Aorta (tissue), 5 donors: ENCODE measurements at regions of chr10 and their contacts with region 1.

Region 1: GRCh38 chr10:91556691-91557566 is 75.9 kb downstream of the PPP1R3C start:
- DNase-seq: no peak
- ATAC-seq: no peak
- H3K4me3 ChIP-seq: no peak overlapping the region
- H3K27ac ChIP-seq: peak overlapping the region in 1 of 2 donors; percentile 70
- H3K4me1 ChIP-seq: peaks cover 0 to 2% of the 10 kb centered on the region in 2 donors
- H3K27me3 ChIP-seq: no peaks in the 10 kb centered on the region

Region 2: DNA sequence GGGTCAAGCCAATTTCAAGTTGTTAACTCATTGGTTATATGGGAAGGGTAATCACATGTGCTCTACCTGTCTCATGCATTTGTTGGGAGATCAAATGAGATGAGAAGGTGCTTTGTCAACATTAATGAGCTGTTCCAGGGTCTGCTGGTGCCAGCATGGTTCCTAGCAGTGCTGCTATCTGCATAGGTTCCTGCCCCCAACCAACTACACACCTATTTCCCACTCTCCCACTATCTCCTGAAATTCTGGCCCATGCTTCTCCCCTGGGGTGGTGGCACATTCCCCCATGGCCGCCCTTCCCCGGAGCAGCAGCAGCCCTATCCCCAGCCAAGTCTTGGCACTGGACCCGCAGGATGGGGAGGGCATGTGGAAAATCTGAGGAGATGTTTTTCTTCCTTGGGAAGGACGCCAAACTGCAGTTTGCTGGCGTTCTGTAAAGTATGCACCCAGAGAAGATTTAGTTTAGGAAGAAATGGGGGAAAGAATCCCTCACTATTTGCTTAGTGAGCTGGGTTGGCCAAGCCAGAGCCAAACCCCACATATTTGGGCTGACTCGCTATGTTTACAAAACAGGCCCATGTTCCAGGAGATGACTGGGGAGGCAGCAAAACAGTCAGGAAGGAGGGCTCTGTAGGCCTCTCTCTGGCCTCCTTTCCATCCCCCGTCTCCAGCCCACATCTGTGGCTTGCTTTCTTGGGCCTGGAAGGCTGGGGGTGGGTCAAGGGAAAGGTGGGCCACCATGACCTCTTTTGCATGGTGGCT is 33.4 kb after region 1 on chr10:
- intact Hi-C with region 1: no loop called
- DNase-seq: peak; percentile 91 to 92
- ATAC-seq: peak; percentile 80
- H3K4me3 ChIP-seq: no peak overlapping the region
- H3K27ac ChIP-seq: peak overlapping the region; percentile 98
- H3K4me1 ChIP-seq: peaks cover 7 to 35% of the 10 kb centered on the region in 2 donors
- H3K27me3 ChIP-seq: no peaks in the 10 kb centered on the region

Region 3: DNA sequence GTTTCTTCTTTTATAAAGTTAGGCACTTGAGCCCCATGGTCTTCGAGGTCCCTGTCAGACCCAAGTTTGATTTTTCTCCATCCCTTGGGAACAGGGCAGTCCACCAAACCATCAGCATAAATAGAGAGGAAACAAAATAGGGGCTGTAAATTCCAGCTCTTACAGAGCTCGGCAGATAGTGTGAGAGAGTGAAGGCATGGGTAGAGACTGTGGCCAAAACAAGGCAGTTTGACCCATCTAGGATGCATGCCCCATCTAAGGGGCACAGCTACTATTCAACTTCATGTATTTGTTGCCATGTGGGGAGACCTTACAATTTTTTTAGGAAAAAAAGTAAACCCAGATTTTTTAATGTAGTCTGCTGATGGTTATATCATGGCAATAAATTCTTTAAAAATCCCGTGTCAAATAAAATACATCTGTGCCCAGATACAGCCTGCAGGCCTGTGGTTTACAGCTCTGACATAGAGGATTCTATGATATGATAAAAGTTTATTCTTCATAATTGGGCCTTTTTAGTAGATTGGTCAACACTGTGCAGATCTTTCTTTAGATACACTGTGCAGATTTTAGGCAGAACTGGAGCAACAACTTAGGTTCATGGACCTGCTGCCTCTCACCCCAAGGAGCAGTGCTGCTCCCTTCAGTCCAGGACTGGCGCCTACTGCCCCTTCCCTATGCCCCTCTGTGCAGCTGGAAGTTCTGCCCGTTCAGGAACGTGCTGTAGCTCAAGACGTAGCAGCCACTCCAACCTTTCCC is 70.6 kb after region 1 on chr10:
- intact Hi-C with region 1: loop called in 1 of 2 experiments (anchors 5 kb)
- DNase-seq: no peak
- ATAC-seq: peak; percentile 17
- H3K4me3 ChIP-seq: peak overlapping the region in 1 of 2 donors; percentile 98
- H3K27ac ChIP-seq: peak overlapping the region in 1 of 2 donors; percentile 36
- H3K4me1 ChIP-seq: no peaks in the 10 kb centered on the region
- H3K27me3 ChIP-seq: no peaks in the 10 kb centered on the region

Region 4: GRCh38 chr10:91816981-91817380 is 260.1 kb after region 1 on chr10:
- intact Hi-C with region 1: no loop called
- DNase-seq: no peak
- ATAC-seq: no peak
- H3K4me3 ChIP-seq: no peak overlapping the region
- H3K27ac ChIP-seq: no peak overlapping the region
- H3K4me1 ChIP-seq: no peaks in the 10 kb centered on the region
- H3K27me3 ChIP-seq: no peaks in the 10 kb centered on the region